SK-N-SH (cell line): ENCODE measurements at regions of chr4 and their contacts with region 1.

Region 1: GRCh38 chr4:47668810-47669408 is 169.0 kb downstream of the CORIN start:
- DNase-seq: peak; percentile 43
- H3K4me3 ChIP-seq: no peak overlapping the region
- H3K27ac ChIP-seq: no peak overlapping the region
- H3K4me1 ChIP-seq: peaks cover 0 to 2% of the 10 kb centered on the region in 2 experiments; a peak in 1 of 4 replicates
- H3K27me3 ChIP-seq: no peaks in the 10 kb centered on the region
- CTCF ChIP-seq: peak; percentile 88
- EP300 ChIP-seq: no peak
- RAD21 ChIP-seq: peak; percentile 81

Region 2: GRCh38 chr4:47650584-47651130 is 18.3 kb before region 1 on chr4:
- CTCF ChIA-PET with region 1: interaction called, 39 read pairs
- POLR2A ChIA-PET with region 1: no interaction called
- DNase-seq: no peak
- H3K4me3 ChIP-seq: no peak overlapping the region
- H3K27ac ChIP-seq: no peak overlapping the region
- H3K4me1 ChIP-seq: no peaks in the 10 kb centered on the region; a peak in 2 of 4 replicates
- H3K27me3 ChIP-seq: no peaks in the 10 kb centered on the region
- CTCF ChIP-seq: no peak
- EP300 ChIP-seq: no peak
- RAD21 ChIP-seq: no peak